Mammary epithelial cell (primary cell): ENCODE measurements at regions of chr6 and their contacts with region 1.

Region 1: GRCh38 chr6:14270925-14271791 is 153.6 kb downstream of the CD83 start:
- DNase-seq: peak; percentile 100
- H3K4me3 ChIP-seq: no peak overlapping the region
- H3K27ac ChIP-seq: peak overlapping the region; percentile 98
- H3K4me1 ChIP-seq: peaks cover 50% of the 10 kb centered on the region
- H3K27me3 ChIP-seq: no peaks in the 10 kb centered on the region
- CTCF ChIP-seq: peak in 1 of 2 donors; percentile 39

Region 2: GRCh38 chr6:13838616-13839015 is 432.5 kb before region 1 on chr6:
- CTCF ChIA-PET with region 1: no interaction called
- dilution Hi-C with region 1: no loop called
- in situ Hi-C with region 1: no loop called
- intact Hi-C with region 1: no loop called
- DNase-seq: no peak
- H3K4me3 ChIP-seq: no peak overlapping the region
- H3K27ac ChIP-seq: no peak overlapping the region
- H3K4me1 ChIP-seq: no peaks in the 10 kb centered on the region
- H3K27me3 ChIP-seq: no peaks in the 10 kb centered on the region
- CTCF ChIP-seq: no peak

Region 3: GRCh38 chr6:14100138-14100537 is 171.0 kb before region 1 on chr6:
- CTCF ChIA-PET with region 1: no interaction called
- dilution Hi-C with region 1: no loop called
- in situ Hi-C with region 1: no loop called
- intact Hi-C with region 1: no loop called
- DNase-seq: no peak
- H3K4me3 ChIP-seq: no peak overlapping the region
- H3K27ac ChIP-seq: no peak overlapping the region
- H3K4me1 ChIP-seq: no peaks in the 10 kb centered on the region
- H3K27me3 ChIP-seq: peaks cover 6% of the 10 kb centered on the region
- CTCF ChIP-seq: no peak

Region 4: GRCh38 chr6:14305624-14306023 is 34.5 kb after region 1 on chr6:
- CTCF ChIA-PET with region 1: no interaction called
- dilution Hi-C with region 1: no loop called
- in situ Hi-C with region 1: no loop called
- intact Hi-C with region 1: loop called (anchors 5 kb)
- DNase-seq: no peak
- H3K4me3 ChIP-seq: no peak overlapping the region
- H3K27ac ChIP-seq: peak overlapping the region; percentile 32
- H3K4me1 ChIP-seq: peaks cover 16% of the 10 kb centered on the region
- H3K27me3 ChIP-seq: no peaks in the 10 kb centered on the region
- CTCF ChIP-seq: no peak

Region 5: DNA sequence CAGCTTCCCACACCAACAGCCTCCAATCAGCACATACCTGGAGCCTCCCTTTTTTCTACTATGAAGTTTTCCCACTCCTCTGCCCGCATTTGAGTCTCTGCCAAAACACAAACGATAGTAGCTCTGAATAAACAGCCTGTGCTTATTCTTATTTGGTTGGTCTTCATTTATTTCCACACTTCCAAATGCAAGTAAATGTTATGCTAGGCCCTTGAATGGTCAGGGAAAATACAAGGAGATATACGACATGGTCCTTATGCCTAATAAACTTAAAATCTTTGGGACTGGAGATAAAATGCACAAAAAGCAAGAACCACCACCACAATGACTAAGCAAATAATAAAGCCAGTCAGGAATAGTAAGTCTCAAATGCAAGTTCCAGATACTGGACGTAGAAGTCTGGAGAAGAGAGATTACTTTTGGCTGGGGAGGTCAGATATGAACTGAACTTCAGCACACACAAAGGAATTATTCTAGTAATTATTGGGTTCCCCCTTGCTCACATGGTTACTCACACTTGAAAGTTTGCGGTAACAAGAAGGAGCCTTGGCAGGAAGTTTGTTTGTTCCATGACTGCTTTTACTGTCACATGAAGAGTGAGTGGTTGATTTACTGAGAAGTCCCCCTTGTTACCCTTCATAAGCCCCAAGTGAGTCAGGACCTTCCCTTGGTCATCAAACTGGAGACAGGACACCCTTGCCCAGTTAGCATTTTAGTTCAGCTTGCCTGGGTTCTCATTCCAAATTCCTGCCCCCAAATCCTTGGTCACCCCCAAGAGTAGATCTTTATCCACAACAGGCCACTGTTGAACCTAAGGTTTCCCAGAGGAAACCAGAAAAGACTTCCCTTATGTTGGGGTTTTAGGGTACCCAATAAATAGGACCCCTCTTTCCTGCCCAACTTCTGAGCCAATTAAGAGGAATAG is 463.5 kb after region 1 on chr6:
- CTCF ChIA-PET with region 1: no interaction called
- dilution Hi-C with region 1: no loop called
- in situ Hi-C with region 1: no loop called
- intact Hi-C with region 1: loop called (anchors 1 kb)
- DNase-seq: peak; percentile 67
- H3K4me3 ChIP-seq: no peak overlapping the region
- H3K27ac ChIP-seq: peak overlapping the region; percentile 99
- H3K4me1 ChIP-seq: peaks cover 36% of the 10 kb centered on the region
- H3K27me3 ChIP-seq: no peaks in the 10 kb centered on the region
- CTCF ChIP-seq: no peak

Region 6: GRCh38 chr6:15062516-15063252 is 791.5 kb after region 1 on chr6:
- CTCF ChIA-PET with region 1: interaction called, 3 read pairs
- dilution Hi-C with region 1: no loop called
- in situ Hi-C with region 1: no loop called
- intact Hi-C with region 1: loop called (anchors 1 kb)
- DNase-seq: peak; percentile 100
- H3K4me3 ChIP-seq: no peak overlapping the region
- H3K27ac ChIP-seq: peak overlapping the region; percentile 77
- H3K4me1 ChIP-seq: peaks cover 39% of the 10 kb centered on the region
- H3K27me3 ChIP-seq: no peaks in the 10 kb centered on the region
- CTCF ChIP-seq: no peak

Region 7: DNA sequence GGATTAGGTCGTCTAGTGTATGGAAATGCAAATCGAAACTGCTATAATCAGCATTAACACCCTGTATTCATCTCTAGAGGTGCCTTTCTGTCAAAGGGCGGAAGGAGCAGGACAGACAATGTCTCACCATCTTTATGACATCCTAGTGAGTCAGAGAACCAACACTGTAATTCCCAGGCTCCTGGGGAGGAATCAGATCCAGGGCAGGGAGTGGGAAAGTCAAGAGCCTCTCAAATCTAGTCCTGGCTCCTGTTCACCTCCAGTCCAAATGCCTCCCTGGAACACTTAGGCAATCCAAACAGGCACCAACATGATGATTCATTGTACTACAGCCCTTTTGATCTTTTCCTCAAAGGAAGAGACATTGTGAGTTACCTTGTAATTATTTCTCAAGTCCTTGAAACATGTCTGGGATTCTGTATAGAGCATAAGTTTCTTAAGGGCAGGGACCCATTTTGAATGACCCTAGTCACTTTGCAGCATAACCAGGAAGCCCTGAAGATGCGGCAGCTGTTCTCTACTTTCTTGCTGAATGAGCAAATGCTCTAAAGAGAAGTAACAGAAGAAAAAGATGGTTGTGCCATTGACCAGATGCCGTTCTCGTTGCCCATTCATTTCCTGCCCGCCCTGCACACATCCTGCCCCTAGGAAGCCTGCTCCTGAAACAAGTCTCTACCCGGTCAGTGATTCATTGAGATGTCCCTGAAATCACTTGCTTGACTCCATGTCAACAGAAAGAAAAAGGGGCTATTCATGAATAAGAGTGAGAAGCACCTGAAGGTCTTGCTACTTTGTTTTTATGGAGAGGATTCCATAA is 861.9 kb after region 1 on chr6:
- CTCF ChIA-PET with region 1: interaction called, 6 read pairs
- dilution Hi-C with region 1: no loop called
- in situ Hi-C with region 1: no loop called
- intact Hi-C with region 1: loop called (anchors 1 kb)
- DNase-seq: peak; percentile 99
- H3K4me3 ChIP-seq: peak overlapping the region in 2 of 3 experiments; percentile 35 to 36
- H3K27ac ChIP-seq: peak overlapping the region; percentile 92
- H3K4me1 ChIP-seq: peaks cover 30% of the 10 kb centered on the region
- H3K27me3 ChIP-seq: no peaks in the 10 kb centered on the region
- CTCF ChIP-seq: no peak